ENCODE measurements at regions of chr2 and their contacts with region 1.

Region 1: GRCh38 chr2:230589497-230590015 is 123.1 kb upstream of the CAB39 start:
- DNase-seq: no peak
- H3K4me3 ChIP-seq: no peak overlapping the region
- H3K27ac ChIP-seq: no peak overlapping the region
- H3K4me1 ChIP-seq: no peaks in the 10 kb centered on the region
- H3K27me3 ChIP-seq: no peaks in the 10 kb centered on the region
- CTCF ChIP-seq: no peak

Region 2: GRCh38 chr2:229980431-229981184 is 608.9 kb before region 1 on chr2:
- CTCF ChIA-PET with region 1: no interaction called
- dilution Hi-C with region 1: loop called (anchors 25 kb)
- in situ Hi-C with region 1: no loop called
- intact Hi-C with region 1: no loop called
- DNase-seq: peak; percentile 64
- H3K4me3 ChIP-seq: no peak overlapping the region
- H3K27ac ChIP-seq: no peak overlapping the region
- H3K4me1 ChIP-seq: no peaks in the 10 kb centered on the region
- H3K27me3 ChIP-seq: no peaks in the 10 kb centered on the region
- CTCF ChIP-seq: no peak

Region 3: DNA sequence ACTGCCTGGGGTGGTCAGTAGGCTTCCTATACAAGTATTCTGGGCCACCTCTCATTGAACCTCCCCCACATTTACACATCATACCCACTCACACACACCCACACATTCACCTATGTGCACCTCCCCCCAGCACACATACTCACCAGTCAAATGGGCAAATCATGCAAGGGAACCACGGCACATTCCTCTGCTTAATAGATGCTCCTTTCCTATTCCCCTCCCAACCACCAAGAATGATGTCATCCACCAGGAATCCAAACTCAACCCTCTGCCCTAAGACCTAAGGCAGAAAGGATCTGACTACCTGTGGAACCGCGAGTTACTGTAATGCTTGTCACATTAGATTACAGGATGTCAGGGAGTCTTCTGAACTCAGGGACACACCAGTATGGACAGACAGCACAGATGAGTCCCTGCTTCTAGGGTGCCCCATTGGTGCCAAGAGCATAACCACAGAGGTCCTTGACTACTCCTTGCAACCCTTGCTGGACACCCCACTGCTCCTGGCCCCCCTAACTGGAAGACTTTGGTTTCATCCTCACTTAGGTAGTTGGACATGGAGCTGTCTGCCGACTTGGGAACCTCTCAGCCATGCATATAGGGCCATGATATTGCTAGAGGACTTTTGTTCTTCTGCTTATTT is 101.6 kb after region 1 on chr2:
- CTCF ChIA-PET with region 1: no interaction called
- dilution Hi-C with region 1: no loop called
- in situ Hi-C with region 1: no loop called
- intact Hi-C with region 1: no loop called
- DNase-seq: peak; percentile 98
- H3K4me3 ChIP-seq: no peak overlapping the region
- H3K27ac ChIP-seq: peak overlapping the region; percentile 73
- H3K4me1 ChIP-seq: peaks cover 56% of the 10 kb centered on the region
- H3K27me3 ChIP-seq: no peaks in the 10 kb centered on the region
- CTCF ChIP-seq: no peak